ENCODE measurements at regions of chr12 and their contacts with region 1.

Region 1: GRCh38 chr12:61781021-61781581 is 479.1 kb upstream of the USP15 start:
- DNase-seq: no peak
- ATAC-seq: no peak
- H3K4me3 ChIP-seq: no peak overlapping the region
- H3K27ac ChIP-seq: no peak overlapping the region
- H3K4me1 ChIP-seq: no peaks in the 10 kb centered on the region
- H3K27me3 ChIP-seq: no peaks in the 10 kb centered on the region
- CTCF ChIP-seq: no peak

Region 2: DNA sequence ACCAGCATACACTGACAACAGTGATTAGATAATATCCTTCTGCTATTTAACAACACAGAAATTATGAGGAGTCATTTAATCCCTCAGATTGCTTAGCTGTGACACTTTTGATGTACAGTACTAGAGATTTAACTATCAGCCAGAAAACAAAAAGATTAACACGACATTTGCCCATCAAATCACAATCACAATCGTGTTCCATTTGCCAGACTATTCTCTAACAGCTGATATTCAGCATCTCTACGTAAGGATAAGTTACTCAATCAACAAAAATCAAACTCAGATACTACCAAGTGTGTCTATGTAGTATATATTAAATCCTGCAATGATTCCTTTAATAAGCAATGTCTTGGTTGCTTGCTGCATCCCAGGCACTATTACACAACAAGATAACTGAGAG is 79.6 kb before region 1 on chr12:
- intact Hi-C with region 1: no loop called
- DNase-seq: no peak
- ATAC-seq: no peak
- H3K4me3 ChIP-seq: no peak overlapping the region
- H3K27ac ChIP-seq: no peak overlapping the region
- H3K4me1 ChIP-seq: no peaks in the 10 kb centered on the region
- H3K27me3 ChIP-seq: no peaks in the 10 kb centered on the region
- CTCF ChIP-seq: no peak

Region 3: GRCh38 chr12:61717986-61718385 is 63.1 kb before region 1 on chr12:
- intact Hi-C with region 1: loop called in 1 of 10 experiments (anchors 10 kb)
- DNase-seq: no peak
- ATAC-seq: no peak
- H3K4me3 ChIP-seq: no peak overlapping the region
- H3K27ac ChIP-seq: no peak overlapping the region
- H3K4me1 ChIP-seq: no peaks in the 10 kb centered on the region
- H3K27me3 ChIP-seq: no peaks in the 10 kb centered on the region
- CTCF ChIP-seq: no peak

Region 4: GRCh38 chr12:61870658-61871484 is 89.8 kb after region 1 on chr12:
- intact Hi-C with region 1: no loop called
- DNase-seq: no peak
- ATAC-seq: peak in 1 of 8 donors; percentile 55
- H3K4me3 ChIP-seq: peak overlapping the region in 1 of 10 donors; percentile 22
- H3K27ac ChIP-seq: peak overlapping the region in 1 of 10 donors; percentile 79
- H3K4me1 ChIP-seq: peaks cover 0 to 19% (median 0%) of the 10 kb centered on the region in 9 donors
- H3K27me3 ChIP-seq: no peaks in the 10 kb centered on the region
- CTCF ChIP-seq: no peak

Measured in heart right ventricle (tissue), 16 donors.